CD8-positive, alpha-beta T cell (primary cell): ENCODE measurements at regions of chr1 and their contacts with region 1.

Region 1: DNA sequence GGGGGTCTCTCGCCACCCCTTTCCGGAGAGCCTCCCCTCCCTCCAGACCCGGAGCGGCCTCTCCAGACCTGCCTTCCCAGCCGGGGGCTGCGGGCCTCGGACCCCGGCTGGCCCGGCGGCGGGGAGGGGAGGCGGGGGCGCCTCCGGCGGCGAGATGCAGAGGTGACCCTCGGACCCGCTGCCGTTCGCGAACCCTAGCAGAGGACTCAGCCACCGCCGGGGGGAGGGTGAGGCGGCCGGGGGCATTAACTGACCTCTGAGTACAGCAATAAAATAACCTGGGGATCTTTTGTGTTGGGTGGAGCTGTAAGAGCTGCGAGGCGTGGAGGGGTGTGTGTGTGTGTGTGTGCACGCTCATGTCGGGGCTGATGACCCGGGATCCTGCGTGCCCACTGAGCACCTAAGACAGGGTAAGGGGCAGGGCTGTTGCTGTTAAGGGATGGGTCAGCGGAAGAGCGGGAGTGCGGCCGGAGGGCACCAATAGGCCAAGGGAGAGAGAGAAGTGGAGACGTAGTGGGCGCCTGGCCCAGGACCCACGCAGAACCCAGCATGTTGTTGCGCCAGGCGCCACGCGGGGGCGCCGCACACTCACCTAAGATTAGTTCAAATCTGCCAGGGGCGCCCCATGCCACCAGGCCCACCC is 6.3 kb downstream of the HAPLN2 start:
- DNase-seq: peak; percentile 37 to 82 (median 70)
- ATAC-seq: peak; percentile 77
- H3K4me3 ChIP-seq: peak overlapping the region; percentile 26 to 46
- H3K4me3 Mint-ChIP-seq: peak overlapping the region; percentile 75
- H3K27ac ChIP-seq: no peak overlapping the region
- H3K27ac Mint-ChIP-seq: no peak overlapping the region
- H3K4me1 ChIP-seq: peaks cover 23% of the 10 kb centered on the region
- H3K4me1 Mint-ChIP-seq: peaks cover 14% of the 10 kb centered on the region
- H3K27me3 ChIP-seq: peaks cover 26 to 33% of the 10 kb centered on the region in 2 experiments
- H3K27me3 Mint-ChIP-seq: peaks cover 53% of the 10 kb centered on the region
- CTCF ChIP-seq: peak; percentile 83

Region 2: GRCh38 chr1:156471496-156472490 is 153.8 kb before region 1 on chr1:
- CTCF ChIA-PET with region 1: no interaction called
- POLR2A ChIA-PET with region 1: no interaction called
- intact Hi-C with region 1: no loop called
- DNase-seq: peak in 2 of 9 experiments; percentile 6 to 8
- ATAC-seq: no peak
- H3K4me3 ChIP-seq: no peak overlapping the region
- H3K4me3 Mint-ChIP-seq: no peak overlapping the region
- H3K27ac ChIP-seq: no peak overlapping the region
- H3K27ac Mint-ChIP-seq: no peak overlapping the region
- H3K4me1 ChIP-seq: no peaks in the 10 kb centered on the region
- H3K4me1 Mint-ChIP-seq: peaks cover 4% of the 10 kb centered on the region
- H3K27me3 ChIP-seq: no peaks in the 10 kb centered on the region
- H3K27me3 Mint-ChIP-seq: no peaks in the 10 kb centered on the region
- CTCF ChIP-seq: no peak

Region 3: DNA sequence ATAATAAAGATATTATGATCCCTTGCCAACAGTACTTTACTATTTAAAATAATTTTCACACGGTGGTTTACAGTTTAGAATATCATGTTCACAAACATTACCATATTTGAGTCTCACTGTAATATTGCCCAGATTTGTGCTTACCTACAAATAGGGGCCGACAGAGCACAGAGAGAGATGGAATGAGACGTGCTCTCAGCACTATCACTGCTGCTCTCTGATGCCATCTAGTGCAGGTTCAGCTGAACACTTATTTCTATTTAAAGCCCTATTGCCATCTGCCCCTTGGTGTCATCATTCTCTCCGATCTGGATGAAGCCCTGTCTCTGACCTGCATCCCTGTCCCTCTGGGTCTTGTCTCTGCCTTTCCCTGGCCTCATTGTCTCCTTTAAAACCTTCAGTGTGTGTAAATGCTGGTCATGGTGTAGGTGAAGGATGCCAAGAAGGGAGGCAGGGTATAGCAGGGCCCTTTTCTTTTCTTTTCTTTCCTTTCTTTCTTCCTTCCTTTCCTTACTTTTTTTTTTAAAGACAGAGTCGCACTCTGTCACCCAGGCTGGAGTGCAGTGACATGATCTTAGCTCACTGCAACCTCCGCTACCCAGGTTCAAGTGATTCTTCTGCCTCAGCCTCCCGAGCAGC is 17.4 kb before region 1 on chr1:
- CTCF ChIA-PET with region 1: interaction called, 20 read pairs
- POLR2A ChIA-PET with region 1: no interaction called
- intact Hi-C with region 1: no loop called
- DNase-seq: peak; percentile 37 to 89 (median 65)
- ATAC-seq: peak; percentile 95
- H3K4me3 ChIP-seq: no peak overlapping the region
- H3K4me3 Mint-ChIP-seq: no peak overlapping the region
- H3K27ac ChIP-seq: no peak overlapping the region
- H3K27ac Mint-ChIP-seq: no peak overlapping the region
- H3K4me1 ChIP-seq: peaks cover 8% of the 10 kb centered on the region
- H3K4me1 Mint-ChIP-seq: peaks cover 11% of the 10 kb centered on the region
- H3K27me3 ChIP-seq: peaks cover 0 to 2% of the 10 kb centered on the region in 2 experiments
- H3K27me3 Mint-ChIP-seq: peaks cover 9% of the 10 kb centered on the region
- CTCF ChIP-seq: peak; percentile 88

Region 4: DNA sequence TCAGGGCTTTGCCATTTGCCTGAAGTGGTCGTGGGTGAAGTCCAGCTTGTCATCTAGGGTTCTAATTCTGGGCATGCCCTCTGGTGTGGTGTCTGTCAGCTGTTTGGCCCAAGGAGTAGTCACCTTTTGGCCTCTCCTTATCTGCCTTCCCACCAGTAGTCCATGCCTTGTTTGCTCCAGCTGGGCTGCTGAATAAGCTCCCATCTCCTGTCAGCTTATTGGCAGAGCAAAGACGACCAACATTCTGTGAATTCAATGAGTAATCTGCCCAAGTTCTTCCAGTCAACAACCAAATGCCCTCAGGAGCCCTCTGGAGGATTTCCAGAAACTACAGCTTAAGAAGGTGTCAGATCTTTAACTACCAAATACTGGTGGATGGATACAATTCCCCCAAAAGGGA is 23.4 kb after region 1 on chr1:
- CTCF ChIA-PET with region 1: interaction called, 19 read pairs
- POLR2A ChIA-PET with region 1: no interaction called
- intact Hi-C with region 1: no loop called
- DNase-seq: no peak
- ATAC-seq: no peak
- H3K4me3 ChIP-seq: no peak overlapping the region
- H3K4me3 Mint-ChIP-seq: no peak overlapping the region
- H3K27ac ChIP-seq: no peak overlapping the region
- H3K27ac Mint-ChIP-seq: no peak overlapping the region
- H3K4me1 ChIP-seq: peaks cover 1% of the 10 kb centered on the region
- H3K4me1 Mint-ChIP-seq: peaks cover 4% of the 10 kb centered on the region
- H3K27me3 ChIP-seq: peaks cover 15 to 24% of the 10 kb centered on the region in 2 experiments
- H3K27me3 Mint-ChIP-seq: peaks cover 69% of the 10 kb centered on the region
- CTCF ChIP-seq: no peak

Region 5: DNA sequence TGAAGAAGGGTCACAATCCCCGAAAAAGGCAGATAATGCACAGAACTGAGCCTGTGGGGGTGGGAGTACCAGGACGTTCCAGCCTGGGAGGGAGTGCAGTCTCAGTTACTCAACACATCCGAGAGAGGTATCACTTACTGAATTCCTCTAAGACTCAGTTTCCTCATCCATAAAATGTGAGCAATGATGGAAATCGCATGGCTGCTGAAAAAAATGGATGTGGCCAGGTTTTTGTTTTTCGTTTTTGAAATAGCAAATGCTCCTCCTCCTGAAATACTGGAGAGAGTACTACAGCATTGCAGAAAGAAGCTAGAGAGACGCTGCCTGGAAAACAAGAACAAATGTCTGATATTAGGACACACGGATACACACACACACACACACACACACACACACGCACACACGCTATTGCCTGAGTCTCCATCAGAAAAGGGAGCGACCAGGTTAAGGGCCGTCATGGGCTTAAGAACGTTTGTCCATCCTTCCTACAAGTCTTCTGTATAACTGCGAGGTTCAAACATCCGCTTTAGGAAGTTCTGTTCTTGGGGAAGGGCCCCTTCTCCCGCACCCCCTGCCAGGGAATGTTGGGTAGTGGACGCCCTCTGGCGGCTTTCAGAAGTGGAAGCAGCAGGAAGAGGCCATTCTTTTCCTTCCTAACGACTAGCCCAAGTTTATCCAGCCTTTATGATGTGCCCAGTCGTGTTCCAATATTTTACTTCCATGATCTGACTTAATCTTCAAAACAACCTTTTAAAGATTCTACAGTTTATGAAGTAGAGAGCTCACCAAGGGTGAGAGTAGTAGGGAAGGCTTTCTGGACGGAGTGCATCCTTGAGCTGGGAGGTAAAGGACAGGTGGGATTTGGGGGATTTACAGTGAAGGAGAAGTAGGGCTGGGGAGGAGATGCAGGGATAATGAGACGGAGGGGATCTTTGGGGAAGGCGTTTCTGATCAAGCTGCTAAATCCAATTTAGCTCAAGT is 52.3 kb after region 1 on chr1:
- CTCF ChIA-PET with region 1: interaction called, 36 read pairs
- POLR2A ChIA-PET with region 1: interaction called, 3 read pairs
- intact Hi-C with region 1: loop called (anchors 1 to 2 kb)
- DNase-seq: peak in 4 of 9 experiments; percentile 18 to 65 (median 52)
- ATAC-seq: peak; percentile 38
- H3K4me3 ChIP-seq: peak overlapping the region in 1 of 2 experiments; percentile 0
- H3K4me3 Mint-ChIP-seq: peak overlapping the region; percentile 45
- H3K27ac ChIP-seq: no peak overlapping the region
- H3K27ac Mint-ChIP-seq: no peak overlapping the region
- H3K4me1 ChIP-seq: peaks cover 10% of the 10 kb centered on the region
- H3K4me1 Mint-ChIP-seq: peaks cover 13% of the 10 kb centered on the region
- H3K27me3 ChIP-seq: peaks cover 21 to 22% of the 10 kb centered on the region in 2 experiments
- H3K27me3 Mint-ChIP-seq: peaks cover 58% of the 10 kb centered on the region
- CTCF ChIP-seq: peak; percentile 27

Region 6: GRCh38 chr1:156705918-156706656 is 80.5 kb after region 1 on chr1:
- CTCF ChIA-PET with region 1: interaction called, 8 read pairs
- POLR2A ChIA-PET with region 1: interaction called, 3 read pairs
- intact Hi-C with region 1: loop called in 1 of 2 experiments (anchors 5 kb)
- DNase-seq: peak; percentile 36 to 81 (median 68)
- ATAC-seq: peak; percentile 66
- H3K4me3 ChIP-seq: peak overlapping the region; percentile 52 to 89
- H3K4me3 Mint-ChIP-seq: peak overlapping the region; percentile 89
- H3K27ac ChIP-seq: peak overlapping the region; percentile 43 to 47
- H3K27ac Mint-ChIP-seq: peak overlapping the region; percentile 73
- H3K4me1 ChIP-seq: peaks cover 35% of the 10 kb centered on the region
- H3K4me1 Mint-ChIP-seq: peaks cover 32% of the 10 kb centered on the region
- H3K27me3 ChIP-seq: peaks cover 8 to 24% of the 10 kb centered on the region in 2 experiments
- H3K27me3 Mint-ChIP-seq: peaks cover 9% of the 10 kb centered on the region
- CTCF ChIP-seq: peak; percentile 82